ENCODE measurements at regions of chr1 and their contacts with region 1.

Region 1: DNA sequence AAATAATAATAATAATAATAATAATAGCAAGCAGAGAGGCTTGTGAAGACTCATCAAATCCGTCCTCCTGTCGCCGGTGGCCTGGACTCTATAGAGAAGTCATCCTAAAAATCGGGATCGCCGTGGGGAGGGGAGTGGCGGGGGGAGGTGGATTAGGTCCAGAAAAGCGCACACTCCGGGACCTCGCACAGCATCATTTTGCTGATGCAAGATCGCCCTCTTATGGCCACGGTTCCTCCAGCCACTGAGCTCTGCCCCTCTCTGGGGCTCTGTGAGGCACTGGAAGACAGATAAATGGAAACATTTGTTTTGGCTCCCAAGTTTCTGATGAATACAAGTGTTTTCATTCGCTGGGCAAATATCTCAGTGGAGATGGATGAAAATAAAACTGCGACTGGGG is 612.0 kb downstream of the MATN1 start:
- DNase-seq: peak; percentile 10
- ATAC-seq: peak; percentile 97
- H3K4me3 ChIP-seq: no peak overlapping the region
- H3K27ac ChIP-seq: no peak overlapping the region
- H3K4me1 ChIP-seq: no peaks in the 10 kb centered on the region
- H3K27me3 ChIP-seq: peaks cover 40% of the 10 kb centered on the region
- CTCF ChIP-seq: peak; percentile 50 to 73 (median 73); a peak in 5 of 6 replicates
- POLR2A ChIP-seq: no peak
- RAD21 ChIP-seq: peak; percentile 78

Region 2: GRCh38 chr1:29698033-29698432 is 413.4 kb before region 1 on chr1:
- CTCF ChIA-PET with region 1: interaction called, 7 read pairs
- POLR2A ChIA-PET with region 1: no interaction called
- RAD21 ChIA-PET with region 1: no interaction called
- intact Hi-C with region 1: loop called (anchors 1 kb)
- DNase-seq: peak; percentile 57
- ATAC-seq: peak; percentile 99
- H3K4me3 ChIP-seq: no peak overlapping the region
- H3K27ac ChIP-seq: no peak overlapping the region
- H3K4me1 ChIP-seq: peaks cover 3 to 9% of the 10 kb centered on the region in 2 experiments; a peak in 2 of 4 replicates
- H3K27me3 ChIP-seq: peaks cover 24% of the 10 kb centered on the region
- CTCF ChIP-seq: peak; percentile 70 to 85 (median 84)
- POLR2A ChIP-seq: no peak
- RAD21 ChIP-seq: peak; percentile 78

Measured in HCT116 (cell line).